Left cardiac atrium (tissue), 4 donors: ENCODE measurements at regions of chr15 and their contacts with region 1.

Region 1: GRCh38 chr15:70722266-70723121 is 40.9 kb downstream of the UACA start:
- DNase-seq: no peak
- ATAC-seq: peak in 1 of 2 donors; percentile 18

Region 2: DNA sequence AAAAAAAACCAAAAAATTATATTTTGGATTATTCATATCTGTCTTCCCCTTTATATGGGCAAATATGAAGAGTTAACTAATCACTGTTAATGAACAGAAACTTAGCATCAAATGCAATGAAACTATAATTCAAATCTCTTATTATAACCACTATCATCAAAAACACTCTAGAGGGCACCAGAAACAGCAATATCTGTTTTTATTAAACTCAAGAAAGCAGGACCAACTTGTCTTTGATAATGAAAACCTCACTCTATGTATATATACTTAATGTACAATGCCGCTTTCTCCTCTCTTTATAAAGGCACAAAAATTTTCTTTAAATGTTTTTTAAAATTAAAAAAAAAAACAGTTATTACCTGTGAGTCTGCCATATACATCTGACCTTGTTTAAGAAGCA is 51.8 kb before region 1 on chr15:
- intact Hi-C with region 1: loop called in 1 of 2 experiments (anchors 10 kb)
- DNase-seq: no peak
- ATAC-seq: no peak